HEK293T (cell line): ENCODE measurements at regions of chr4 and their contacts with region 1.

Region 1: GRCh38 chr4:185196437-185196836 is 7.4 kb downstream of the CFAP97 start:
- DNase-seq: no peak

Region 2: GRCh38 chr4:185183619-185184281 is 12.7 kb before region 1 on chr4:
- CTCF ChIA-PET with region 1: interaction called, 15 read pairs
- POLR2A ChIA-PET with region 1: interaction called, 5 read pairs
- DNase-seq: peak; percentile 29

Region 3: GRCh38 chr4:185587427-185588161 is 391.2 kb after region 1 on chr4:
- CTCF ChIA-PET with region 1: no interaction called
- POLR2A ChIA-PET with region 1: no interaction called
- DNase-seq: no peak